ENCODE measurements at regions of chr9 and their contacts with region 1.

Region 1: GRCh38 chr9:123174887-123175518 is 93.4 kb downstream of the STRBP start:
- DNase-seq: peak in 1 of 2 experiments; percentile 17
- H3K4me3 ChIP-seq: peak overlapping the region in 1 of 4 experiments; percentile 45; a peak in 3 of 8 replicates
- H3K27ac ChIP-seq: peak overlapping the region; percentile 81
- H3K4me1 ChIP-seq: peaks cover 4 to 30% (median 16%) of the 10 kb centered on the region in 4 experiments; a peak in 6 of 7 replicates
- H3K27me3 ChIP-seq: no peaks in the 10 kb centered on the region
- CTCF ChIP-seq: no peak
- EP300 ChIP-seq: peak in 1 of 2 experiments; percentile 92; a peak in 1 of 3 replicates
- POLR2A ChIP-seq: no peak
- RAD21 ChIP-seq: no peak

Region 2: GRCh38 chr9:123187131-123187530 is 12.1 kb after region 1 on chr9:
- CTCF ChIA-PET with region 1: interaction called, 4 read pairs
- POLR2A ChIA-PET with region 1: interaction called, 15 read pairs
- DNase-seq: no peak
- H3K4me3 ChIP-seq: no peak overlapping the region
- H3K27ac ChIP-seq: no peak overlapping the region
- H3K4me1 ChIP-seq: peaks cover 0 to 8% (median 0%) of the 10 kb centered on the region in 4 experiments; a peak in 3 of 7 replicates
- H3K27me3 ChIP-seq: no peaks in the 10 kb centered on the region
- CTCF ChIP-seq: no peak
- EP300 ChIP-seq: no peak
- POLR2A ChIP-seq: no peak
- RAD21 ChIP-seq: no peak

Measured in H1 (cell line).